CD8-positive, alpha-beta T cell (primary cell): ENCODE measurements at regions of chr5 and their contacts with region 1.

Region 1: DNA sequence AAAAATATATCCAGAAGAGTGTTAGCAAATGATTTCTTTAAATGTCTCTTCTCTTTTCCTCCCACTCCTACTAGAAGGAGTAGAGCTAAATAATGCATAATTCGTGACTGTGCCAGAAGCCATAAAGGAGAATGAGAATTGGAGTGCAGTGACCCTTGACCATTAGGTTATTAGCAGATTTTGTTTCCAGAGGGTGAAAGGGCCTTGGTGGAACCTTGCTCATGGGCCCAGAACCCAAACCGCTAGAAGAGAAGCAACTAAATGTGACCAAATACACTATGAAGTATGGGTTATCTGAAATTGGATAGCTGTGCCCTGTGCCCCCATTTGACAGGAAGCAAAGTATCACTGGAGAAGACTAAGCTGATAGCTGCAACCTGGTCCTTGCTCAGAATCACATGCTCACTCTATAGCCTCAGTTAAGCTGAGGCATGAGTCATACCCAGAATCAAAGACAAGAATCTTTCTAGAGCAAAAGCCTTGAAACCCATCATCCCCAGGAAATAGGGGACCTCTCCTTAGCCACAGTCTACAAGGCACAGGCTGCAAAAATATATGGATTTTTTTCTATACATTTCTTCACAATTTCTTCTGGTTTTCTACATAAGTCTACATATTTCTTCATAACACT is 36.3 kb downstream of the CAPSL start:
- DNase-seq: peak in 2 of 9 experiments; percentile 39 to 41
- ATAC-seq: peak; percentile 69
- H3K4me3 ChIP-seq: no peak overlapping the region
- H3K4me3 Mint-ChIP-seq: no peak overlapping the region
- H3K27ac ChIP-seq: no peak overlapping the region
- H3K27ac Mint-ChIP-seq: no peak overlapping the region
- H3K4me1 ChIP-seq: peaks cover 47% of the 10 kb centered on the region
- H3K4me1 Mint-ChIP-seq: peaks cover 61% of the 10 kb centered on the region
- H3K27me3 ChIP-seq: no peaks in the 10 kb centered on the region
- H3K27me3 Mint-ChIP-seq: no peaks in the 10 kb centered on the region
- CTCF ChIP-seq: no peak

Region 2: GRCh38 chr5:35884115-35884788 is 17.9 kb before region 1 on chr5:
- CTCF ChIA-PET with region 1: interaction called, 7 read pairs
- POLR2A ChIA-PET with region 1: interaction called, 58 read pairs
- intact Hi-C with region 1: loop called in 1 of 2 experiments (anchors 2 kb)
- DNase-seq: peak in 2 of 9 experiments; percentile 35 to 57
- ATAC-seq: peak; percentile 47
- H3K4me3 ChIP-seq: no peak overlapping the region
- H3K4me3 Mint-ChIP-seq: peak overlapping the region; percentile 3
- H3K27ac ChIP-seq: peak overlapping the region in 1 of 2 experiments; percentile 44
- H3K27ac Mint-ChIP-seq: peak overlapping the region; percentile 89
- H3K4me1 ChIP-seq: peaks cover 26% of the 10 kb centered on the region
- H3K4me1 Mint-ChIP-seq: peaks cover 47% of the 10 kb centered on the region
- H3K27me3 ChIP-seq: no peaks in the 10 kb centered on the region
- H3K27me3 Mint-ChIP-seq: no peaks in the 10 kb centered on the region
- CTCF ChIP-seq: no peak

Region 3: GRCh38 chr5:35919191-35919590 is 17.0 kb after region 1 on chr5:
- CTCF ChIA-PET with region 1: no interaction called
- POLR2A ChIA-PET with region 1: no interaction called
- intact Hi-C with region 1: loop called in 1 of 2 experiments (anchors 1 kb)
- DNase-seq: no peak
- ATAC-seq: no peak
- H3K4me3 ChIP-seq: no peak overlapping the region
- H3K4me3 Mint-ChIP-seq: no peak overlapping the region
- H3K27ac ChIP-seq: no peak overlapping the region
- H3K27ac Mint-ChIP-seq: no peak overlapping the region
- H3K4me1 ChIP-seq: peaks cover 2% of the 10 kb centered on the region
- H3K4me1 Mint-ChIP-seq: peaks cover 24% of the 10 kb centered on the region
- H3K27me3 ChIP-seq: no peaks in the 10 kb centered on the region
- H3K27me3 Mint-ChIP-seq: no peaks in the 10 kb centered on the region
- CTCF ChIP-seq: no peak